Tibial artery (tissue), 4 donors: ENCODE measurements at regions of chr20 and their contacts with region 1.

Region 1: DNA sequence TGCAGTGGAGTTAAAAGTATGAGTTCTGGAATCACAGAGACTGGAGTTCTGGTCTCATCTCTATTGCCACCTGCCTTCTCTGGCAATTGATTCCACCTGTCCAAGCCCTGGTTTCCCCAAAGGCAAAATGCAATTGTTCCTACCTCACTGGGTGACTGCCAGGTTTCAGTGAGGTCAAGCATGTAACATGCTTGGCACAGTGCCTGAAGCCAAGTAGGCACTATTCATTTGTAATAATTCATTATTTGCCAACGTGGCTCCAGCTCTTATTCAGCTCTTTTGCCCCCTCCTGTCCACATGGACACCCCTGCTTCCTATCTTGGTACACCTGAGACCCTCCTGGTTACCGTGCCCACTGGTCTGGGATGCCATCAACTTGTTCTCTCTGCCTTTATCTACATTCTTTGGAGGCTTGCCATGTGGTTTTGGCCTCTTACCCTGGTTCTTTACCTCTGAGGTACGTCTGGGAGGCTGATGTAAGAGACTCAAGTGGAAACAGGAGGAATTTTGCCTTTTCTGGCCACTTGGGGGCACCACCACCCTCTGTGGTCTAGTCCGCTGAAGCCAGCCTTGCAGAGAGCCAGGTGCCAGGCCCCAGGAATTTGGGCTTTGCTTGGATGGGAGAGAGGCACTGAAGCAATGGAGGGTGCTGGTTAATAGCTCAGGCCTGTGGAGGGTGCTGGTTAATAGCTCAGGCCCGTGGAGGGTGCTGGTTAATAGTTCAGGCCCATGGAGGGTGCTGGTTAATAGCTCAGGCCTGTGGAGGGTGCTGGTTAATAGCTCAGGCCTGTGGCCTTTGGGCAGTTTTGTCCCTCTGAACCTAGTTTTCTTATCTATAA is 1.7 kb downstream of the KCNK15 start:
- DNase-seq: peak; percentile 86 to 90
- H3K4me3 ChIP-seq: peak overlapping the region; percentile 66 to 89
- H3K27ac ChIP-seq: peak overlapping the region; percentile 75 to 86
- H3K4me1 ChIP-seq: peaks cover 0 to 56% (median 36%) of the 10 kb centered on the region in 4 donors
- H3K27me3 ChIP-seq: peaks cover 0 to 28% of the 10 kb centered on the region in 2 donors
- CTCF ChIP-seq: peak; percentile 70 to 74

Region 2: GRCh38 chr20:44495802-44496481 is 251.4 kb before region 1 on chr20:
- intact Hi-C with region 1: no loop called
- DNase-seq: no peak
- H3K4me3 ChIP-seq: no peak overlapping the region
- H3K27ac ChIP-seq: peak overlapping the region; percentile 50 to 71
- H3K4me1 ChIP-seq: peaks cover 0 to 36% (median 0%) of the 10 kb centered on the region in 4 donors
- H3K27me3 ChIP-seq: no peaks in the 10 kb centered on the region
- CTCF ChIP-seq: no peak

Region 3: GRCh38 chr20:44629542-44629941 is 117.8 kb before region 1 on chr20:
- intact Hi-C with region 1: no loop called
- DNase-seq: no peak
- H3K4me3 ChIP-seq: no peak overlapping the region
- H3K27ac ChIP-seq: no peak overlapping the region
- H3K4me1 ChIP-seq: peaks cover 0 to 5% (median 0%) of the 10 kb centered on the region in 4 donors
- H3K27me3 ChIP-seq: no peaks in the 10 kb centered on the region
- CTCF ChIP-seq: no peak

Region 4: DNA sequence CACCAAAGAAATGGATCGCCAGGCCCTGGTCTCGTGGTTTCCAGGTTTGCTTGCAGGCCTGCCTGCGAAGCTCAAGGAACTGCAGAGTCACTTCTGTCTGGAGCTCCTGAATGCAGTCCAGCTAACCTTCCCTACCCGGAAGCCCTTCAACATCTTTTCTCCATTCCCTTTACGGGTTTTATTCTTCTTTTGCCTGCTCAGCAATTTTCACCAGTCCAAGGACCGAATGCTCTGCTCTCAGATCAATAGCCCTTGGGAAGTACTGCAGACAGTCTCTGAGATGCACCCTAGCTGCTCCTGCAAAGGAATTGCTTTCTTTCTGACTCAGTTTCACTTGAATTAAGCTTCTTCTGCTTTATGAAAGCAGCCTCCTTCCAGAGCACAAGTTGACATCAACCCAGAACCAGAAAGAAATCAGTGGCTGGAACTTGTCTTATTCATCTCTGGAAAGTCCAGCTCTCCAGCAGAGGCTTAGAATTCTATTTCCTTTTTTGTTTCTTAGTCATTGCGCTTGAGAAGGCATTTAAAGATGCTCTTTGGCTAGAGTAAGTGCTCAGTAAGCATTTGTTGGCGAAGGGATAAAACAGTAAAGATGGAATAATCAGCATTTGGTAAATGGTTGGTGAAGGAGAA is 119.4 kb after region 1 on chr20:
- intact Hi-C with region 1: loop called (anchors 5 kb)
- DNase-seq: no peak
- H3K4me3 ChIP-seq: no peak overlapping the region
- H3K27ac ChIP-seq: peak overlapping the region; percentile 16 to 26
- H3K4me1 ChIP-seq: peaks cover 0 to 31% (median 24%) of the 10 kb centered on the region in 4 donors
- H3K27me3 ChIP-seq: no peaks in the 10 kb centered on the region
- CTCF ChIP-seq: no peak

Region 5: DNA sequence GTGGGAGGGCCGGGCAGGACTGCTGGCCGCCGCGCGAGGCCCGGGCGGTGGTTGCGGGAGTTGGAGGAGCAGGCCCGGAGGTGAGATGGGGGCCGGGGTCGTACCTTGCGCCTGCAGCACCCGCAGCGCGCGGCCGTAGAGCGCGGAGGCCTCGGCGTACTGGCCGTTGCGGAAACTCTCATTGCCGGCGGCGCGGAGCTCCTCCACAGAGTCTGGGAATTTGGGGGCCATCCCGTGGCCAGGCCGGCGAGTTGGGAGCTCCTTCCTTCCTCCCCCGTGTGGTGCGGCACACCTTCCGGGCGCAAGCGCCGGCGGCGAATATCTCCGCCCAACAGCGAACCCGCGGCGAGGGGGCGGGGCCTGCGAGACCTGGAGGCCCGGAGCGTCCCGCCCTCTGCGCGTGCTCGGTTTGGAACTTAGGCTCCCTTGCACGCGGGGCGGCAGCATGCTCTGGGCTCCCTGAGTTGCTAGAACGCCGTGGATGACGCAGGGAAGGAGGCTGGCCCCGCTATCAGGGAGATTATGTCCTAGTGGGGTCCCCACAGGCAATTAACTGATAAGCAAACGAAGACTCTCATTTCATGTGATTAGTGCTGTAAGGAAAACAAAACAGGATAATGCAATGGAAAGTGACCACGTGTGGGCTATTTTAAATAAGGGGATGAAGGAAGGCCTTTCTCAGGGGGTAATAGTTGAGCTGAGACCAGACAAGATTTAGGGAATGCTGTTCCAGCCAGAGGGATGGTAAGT is 212.9 kb after region 1 on chr20 and contains the start of gene TOMM34:
- intact Hi-C with region 1: loop called (anchors 10 kb)
- DNase-seq: peak; percentile 97
- H3K4me3 ChIP-seq: peak within 1 kb of the TSS; percentile 82 to 90
- H3K27ac ChIP-seq: peak within 1 kb of the TSS; percentile 75 to 87
- H3K4me1 ChIP-seq: peaks cover 0 to 23% (median 13%) of the 10 kb centered on the region in 4 donors
- H3K27me3 ChIP-seq: no peaks in the 10 kb centered on the region
- CTCF ChIP-seq: no peak